OCI-LY7 (cell line): ENCODE measurements at regions of chr10 and their contacts with region 1.

Region 1: DNA sequence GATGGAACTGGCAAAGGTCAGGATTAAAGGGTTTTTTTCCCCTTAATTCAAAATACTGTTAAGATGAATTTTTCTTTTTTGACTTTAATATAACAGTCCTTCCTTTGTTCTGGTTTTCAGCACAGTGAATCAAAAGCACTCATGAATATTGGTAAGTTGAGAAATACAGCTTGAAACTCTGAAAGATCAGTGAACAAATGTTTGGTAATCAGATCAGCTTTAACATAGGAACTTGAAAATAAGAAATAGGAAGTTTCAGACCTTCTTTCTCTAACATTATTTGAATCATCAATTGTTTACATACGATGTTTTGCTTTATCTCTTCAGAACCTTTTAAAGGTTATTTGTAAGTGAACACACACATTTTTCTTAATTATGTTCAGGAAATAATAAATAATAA is 90.5 kb downstream of the SGMS1 start:
- DNase-seq: no peak
- H3K4me3 ChIP-seq: no peak overlapping the region
- H3K27ac ChIP-seq: no peak overlapping the region
- H3K4me1 ChIP-seq: no peaks in the 10 kb centered on the region
- CTCF ChIP-seq: no peak

Region 2: DNA sequence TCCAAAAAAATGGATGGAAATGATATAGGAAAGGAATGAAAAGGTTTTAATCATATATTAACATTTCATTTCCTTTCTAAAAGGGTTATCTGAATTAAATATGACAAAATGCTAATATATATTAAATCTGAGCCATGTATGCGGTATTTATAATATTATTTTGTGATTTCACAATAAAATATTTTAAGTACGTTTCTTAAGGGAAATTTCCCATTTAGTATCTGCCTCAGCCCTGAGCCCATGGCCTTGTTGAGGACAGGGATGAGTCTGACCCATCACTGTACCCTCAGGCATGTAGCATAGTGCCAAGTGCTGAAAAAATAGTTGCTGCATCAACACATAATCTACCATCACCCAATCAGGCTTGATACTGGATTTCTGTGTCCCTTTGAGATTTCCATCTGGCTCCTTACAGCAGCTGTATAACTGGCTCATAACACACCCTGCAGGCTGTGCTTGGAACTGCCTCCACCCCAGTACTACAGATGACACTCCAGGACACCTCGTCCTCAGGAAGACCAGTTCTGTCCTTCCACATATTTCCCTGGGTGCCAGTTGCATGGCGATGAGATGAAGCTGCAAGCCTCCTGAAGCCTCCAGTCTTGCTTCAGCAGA is 222.6 kb before region 1 on chr10:
- CTCF ChIA-PET with region 1: no interaction called
- POLR2A ChIA-PET with region 1: no interaction called
- intact Hi-C with region 1: no loop called
- DNase-seq: peak; percentile 33
- H3K4me3 ChIP-seq: no peak overlapping the region
- H3K27ac ChIP-seq: no peak overlapping the region
- H3K4me1 ChIP-seq: peaks cover 6% of the 10 kb centered on the region
- CTCF ChIP-seq: peak; percentile 66

Region 3: DNA sequence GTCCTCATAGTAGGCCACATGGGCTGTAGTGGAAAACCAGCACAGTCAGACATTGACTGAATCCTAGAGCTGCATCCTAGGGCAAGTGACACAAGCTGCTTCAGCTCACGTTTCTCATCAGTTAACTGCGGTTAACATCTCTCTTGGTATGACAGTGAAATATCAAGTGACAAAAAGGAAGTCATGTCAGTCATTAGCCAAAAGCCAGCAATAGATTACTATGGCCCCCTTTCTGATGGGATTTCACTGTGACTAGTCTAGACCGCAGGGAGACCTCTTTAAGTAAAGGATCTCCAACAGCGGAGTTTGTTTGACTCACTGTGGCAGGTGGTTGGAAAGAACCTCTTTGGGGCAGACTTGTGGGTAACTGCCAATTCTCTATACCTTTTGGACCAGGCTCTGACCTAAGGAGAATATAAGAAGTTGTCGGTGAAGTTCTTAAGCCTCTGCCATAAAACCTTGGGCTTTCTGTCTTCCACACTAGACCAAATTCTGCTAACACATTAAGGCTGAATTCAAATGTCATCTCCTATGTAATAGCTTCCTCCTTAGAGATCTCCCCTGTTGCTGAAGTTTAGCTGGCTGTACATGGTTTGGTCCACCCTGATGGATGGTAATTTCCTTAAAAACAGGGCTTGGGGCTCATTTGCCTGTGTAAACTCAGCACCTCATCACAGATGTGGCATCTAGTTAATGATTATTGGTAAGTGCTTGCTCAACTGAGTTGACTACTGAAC is 24.8 kb before region 1 on chr10:
- CTCF ChIA-PET with region 1: no interaction called
- POLR2A ChIA-PET with region 1: interaction called, 10 read pairs
- intact Hi-C with region 1: no loop called
- DNase-seq: no peak
- H3K4me3 ChIP-seq: no peak overlapping the region
- H3K27ac ChIP-seq: no peak overlapping the region
- H3K4me1 ChIP-seq: peaks cover 5% of the 10 kb centered on the region
- CTCF ChIP-seq: no peak

Region 4: DNA sequence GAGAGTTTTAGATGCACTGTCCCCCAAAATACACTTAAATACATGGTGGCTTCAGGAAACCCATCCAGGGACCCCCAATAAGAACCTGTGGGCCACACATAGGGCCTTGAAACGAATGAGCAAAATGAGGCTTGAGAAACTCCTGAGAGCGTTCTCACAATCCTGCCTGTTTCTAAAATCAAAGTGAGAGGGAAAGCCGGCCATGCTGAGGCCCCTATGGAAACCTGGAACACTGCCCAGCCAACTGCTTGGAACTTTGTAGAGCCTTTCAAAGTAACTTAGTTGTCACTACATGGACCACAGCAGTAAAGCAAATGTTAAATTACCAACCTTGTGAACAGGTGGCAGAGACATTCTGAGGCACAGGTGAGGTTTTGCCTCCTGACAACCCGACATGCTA is 77.1 kb after region 1 on chr10:
- CTCF ChIA-PET with region 1: no interaction called
- POLR2A ChIA-PET with region 1: no interaction called
- intact Hi-C with region 1: no loop called
- DNase-seq: no peak
- H3K4me3 ChIP-seq: no peak overlapping the region
- H3K27ac ChIP-seq: no peak overlapping the region
- H3K4me1 ChIP-seq: peaks cover 42% of the 10 kb centered on the region
- CTCF ChIP-seq: no peak